PC-3 (cell line): ENCODE measurements at regions of chr3 and their contacts with region 1.

Region 1: GRCh38 chr3:102235679-102236078 is 199.1 kb upstream of the ZPLD1 start:
- DNase-seq: peak; percentile 57
- ATAC-seq: no peak
- H3K4me3 ChIP-seq: no peak overlapping the region
- H3K27ac ChIP-seq: no peak overlapping the region
- H3K4me1 ChIP-seq: peaks cover 56% of the 10 kb centered on the region
- H3K27me3 ChIP-seq: no peaks in the 10 kb centered on the region
- CTCF ChIP-seq: peak; percentile 85

Region 2: DNA sequence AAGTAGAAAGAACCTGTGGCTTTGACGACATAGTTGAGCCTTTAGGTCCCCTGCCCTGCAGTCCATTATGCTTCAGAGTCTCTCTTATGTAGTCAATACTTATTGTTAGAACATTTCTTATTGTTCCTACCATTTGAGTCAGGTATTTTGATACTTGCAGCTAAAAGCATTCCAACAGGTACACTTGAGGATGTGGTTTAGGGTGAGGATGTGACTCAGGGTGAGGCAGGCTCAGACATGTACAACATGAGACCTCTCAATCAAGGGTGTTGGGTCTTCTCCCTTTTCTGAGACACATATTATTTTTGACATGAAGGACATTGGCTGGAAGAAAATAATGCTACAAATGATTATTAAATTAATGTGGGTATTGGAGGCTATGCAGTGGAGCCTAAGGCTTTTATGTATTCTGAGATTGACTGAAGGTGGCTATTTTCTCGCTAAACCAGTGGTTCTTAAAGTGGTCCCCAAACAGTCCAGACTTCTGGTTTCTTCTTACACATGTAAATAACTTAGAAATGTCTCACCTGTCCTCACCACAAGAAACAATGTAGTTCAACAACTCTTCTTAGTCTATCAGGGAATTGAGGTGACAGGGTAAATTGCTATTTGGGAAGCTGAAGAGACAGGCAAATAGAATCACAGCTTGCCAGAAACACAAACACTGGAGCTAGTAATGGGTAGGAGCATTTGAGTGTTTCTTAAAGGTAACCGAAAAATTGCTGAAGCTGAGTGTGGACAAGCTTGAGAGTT is 63.6 kb after region 1 on chr3:
- CTCF ChIA-PET with region 1: no interaction called
- POLR2A ChIA-PET with region 1: no interaction called
- intact Hi-C with region 1: loop called (anchors 1 kb)
- DNase-seq: peak; percentile 97
- ATAC-seq: peak; percentile 96
- H3K4me3 ChIP-seq: peak overlapping the region; percentile 13; the same call in 1 of the 2 replicates
- H3K27ac ChIP-seq: peak overlapping the region; percentile 82
- H3K4me1 ChIP-seq: peaks cover 45% of the 10 kb centered on the region
- H3K27me3 ChIP-seq: no peaks in the 10 kb centered on the region
- CTCF ChIP-seq: no peak

Region 3: DNA sequence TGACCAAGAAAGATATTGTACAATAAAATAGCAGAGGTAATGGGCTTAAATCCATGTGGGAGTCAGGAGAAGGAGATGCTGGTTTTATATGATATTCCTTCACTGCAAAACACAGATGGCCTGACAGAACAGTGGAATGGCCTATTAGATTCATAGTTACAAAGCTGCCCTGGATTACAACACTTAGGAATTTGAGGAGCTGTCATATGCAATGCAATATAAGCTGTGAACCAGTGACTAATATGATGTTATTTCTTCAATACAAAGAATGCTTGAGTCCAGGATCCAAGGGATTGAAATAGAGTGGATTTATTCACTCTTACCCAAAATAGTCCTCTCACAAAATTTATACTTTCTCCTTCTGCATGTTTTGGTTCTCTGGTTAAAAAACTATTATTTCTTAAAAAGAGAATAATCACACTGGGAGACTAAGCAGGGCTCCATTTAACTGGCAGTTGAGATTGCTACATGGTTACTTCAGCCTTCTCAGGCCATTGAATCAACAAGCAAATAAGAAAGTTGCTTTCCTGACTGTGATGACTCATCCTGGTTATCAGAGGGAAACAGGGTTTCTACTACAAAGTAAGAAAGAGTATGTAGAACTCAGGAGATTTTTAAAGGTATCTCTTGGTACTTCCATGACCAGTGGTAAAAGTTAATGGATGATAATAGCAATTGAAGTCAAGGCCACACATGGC is 119.3 kb after region 1 on chr3:
- CTCF ChIA-PET with region 1: no interaction called
- POLR2A ChIA-PET with region 1: interaction called, 3 read pairs
- intact Hi-C with region 1: loop called (anchors 1 kb)
- DNase-seq: peak; percentile 85
- ATAC-seq: peak; percentile 88
- H3K4me3 ChIP-seq: no peak overlapping the region
- H3K27ac ChIP-seq: peak overlapping the region; percentile 55
- H3K4me1 ChIP-seq: peaks cover 20% of the 10 kb centered on the region
- H3K27me3 ChIP-seq: no peaks in the 10 kb centered on the region
- CTCF ChIP-seq: no peak

Region 4: DNA sequence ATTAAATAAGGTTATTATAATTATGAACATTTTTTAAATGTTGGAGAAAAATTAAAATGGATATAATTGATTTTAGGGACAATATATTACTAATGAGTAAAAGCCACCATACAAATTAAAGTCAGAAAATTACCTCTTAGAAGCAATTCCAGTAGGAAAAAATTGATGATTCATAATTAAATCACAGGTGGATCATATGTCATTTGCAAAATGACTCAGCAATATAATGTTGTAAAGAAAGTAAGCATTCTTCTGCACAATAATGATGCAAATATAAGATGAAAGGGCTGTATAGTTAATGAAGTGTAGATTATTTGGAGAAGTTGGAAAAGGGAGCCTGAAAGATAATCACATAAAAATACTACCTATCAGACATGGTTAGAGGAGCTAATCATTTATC is 224.9 kb after region 1 on chr3:
- CTCF ChIA-PET with region 1: no interaction called
- POLR2A ChIA-PET with region 1: no interaction called
- intact Hi-C with region 1: loop called (anchors 1 kb)
- DNase-seq: peak; percentile 86
- ATAC-seq: peak; percentile 90
- H3K4me3 ChIP-seq: no peak overlapping the region
- H3K27ac ChIP-seq: peak overlapping the region; percentile 26
- H3K4me1 ChIP-seq: peaks cover 24% of the 10 kb centered on the region
- H3K27me3 ChIP-seq: no peaks in the 10 kb centered on the region
- CTCF ChIP-seq: no peak

Region 5: GRCh38 chr3:102529452-102529851 is 293.8 kb after region 1 on chr3:
- CTCF ChIA-PET with region 1: interaction called, 4 read pairs
- POLR2A ChIA-PET with region 1: interaction called, 6 read pairs
- intact Hi-C with region 1: loop called (anchors 1 kb)
- DNase-seq: peak; percentile 77
- ATAC-seq: peak; percentile 55
- H3K4me3 ChIP-seq: no peak overlapping the region
- H3K27ac ChIP-seq: peak overlapping the region; percentile 95
- H3K4me1 ChIP-seq: peaks cover 37% of the 10 kb centered on the region
- H3K27me3 ChIP-seq: no peaks in the 10 kb centered on the region
- CTCF ChIP-seq: peak; percentile 87